HCT116 (cell line): ENCODE measurements at regions of chr1 and their contacts with region 1.

Region 1: DNA sequence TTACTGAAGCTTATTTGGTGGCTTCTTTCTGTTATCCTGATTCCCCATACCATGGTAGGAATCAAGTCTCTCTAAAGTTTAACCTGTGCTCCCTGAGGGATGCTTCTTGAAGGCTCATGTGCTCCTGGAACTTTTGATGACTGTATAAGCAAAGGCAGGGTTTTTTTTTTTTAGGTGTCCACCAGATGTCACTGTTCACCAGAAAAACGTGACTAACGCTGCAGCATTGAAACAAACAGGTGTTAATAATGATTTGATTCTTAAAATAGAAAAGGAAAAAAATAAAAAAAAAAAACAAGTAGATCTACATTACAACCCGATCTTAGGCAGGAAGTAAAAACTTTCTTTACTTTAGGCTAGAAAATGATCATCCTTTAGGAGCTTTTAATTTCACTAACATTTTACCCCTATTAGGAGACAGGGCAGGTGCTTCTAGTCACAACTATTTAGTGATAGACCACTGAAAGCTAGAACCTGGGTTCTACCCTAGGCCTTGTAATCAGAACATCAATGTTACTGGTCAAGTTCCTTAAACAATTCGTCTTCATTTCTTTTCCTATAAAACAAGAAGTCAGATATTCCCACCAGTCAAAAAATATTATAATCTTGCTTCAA is 223.0 kb downstream of the PLA2G4A start:
- DNase-seq: peak; percentile 59
- ATAC-seq: peak; percentile 74
- H3K4me3 ChIP-seq: no peak overlapping the region
- H3K27ac ChIP-seq: no peak overlapping the region
- H3K4me1 ChIP-seq: no peaks in the 10 kb centered on the region
- H3K27me3 ChIP-seq: no peaks in the 10 kb centered on the region
- CTCF ChIP-seq: peak; percentile 38 to 65 (median 51); a peak in 5 of 6 replicates
- POLR2A ChIP-seq: no peak
- RAD21 ChIP-seq: peak; percentile 70

Region 2: DNA sequence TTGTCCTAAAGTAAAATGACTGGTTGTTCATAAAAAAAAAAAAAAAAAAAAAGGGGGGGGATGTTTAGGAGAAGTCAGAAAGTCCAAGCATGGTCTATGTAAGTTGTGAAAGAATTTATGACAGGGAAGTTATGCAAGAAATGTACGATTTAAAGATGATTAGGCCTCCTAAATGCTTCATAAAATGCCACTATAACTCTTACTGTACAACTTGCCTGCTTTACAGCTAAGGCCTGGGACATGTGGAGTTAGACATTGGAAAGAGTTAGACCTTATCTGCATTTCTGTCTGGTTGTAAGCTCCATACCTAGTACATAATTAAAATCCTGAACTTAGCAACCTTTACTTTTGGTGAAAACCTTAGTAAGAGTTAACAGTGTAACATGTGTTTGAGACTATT is 826.6 kb before region 1 on chr1:
- CTCF ChIA-PET with region 1: no interaction called
- POLR2A ChIA-PET with region 1: no interaction called
- RAD21 ChIA-PET with region 1: no interaction called
- intact Hi-C with region 1: no loop called
- DNase-seq: no peak
- ATAC-seq: no peak
- H3K4me3 ChIP-seq: no peak overlapping the region
- H3K27ac ChIP-seq: no peak overlapping the region
- H3K4me1 ChIP-seq: no peaks in the 10 kb centered on the region
- H3K27me3 ChIP-seq: no peaks in the 10 kb centered on the region
- CTCF ChIP-seq: no peak
- POLR2A ChIP-seq: no peak
- RAD21 ChIP-seq: no peak

Region 3: DNA sequence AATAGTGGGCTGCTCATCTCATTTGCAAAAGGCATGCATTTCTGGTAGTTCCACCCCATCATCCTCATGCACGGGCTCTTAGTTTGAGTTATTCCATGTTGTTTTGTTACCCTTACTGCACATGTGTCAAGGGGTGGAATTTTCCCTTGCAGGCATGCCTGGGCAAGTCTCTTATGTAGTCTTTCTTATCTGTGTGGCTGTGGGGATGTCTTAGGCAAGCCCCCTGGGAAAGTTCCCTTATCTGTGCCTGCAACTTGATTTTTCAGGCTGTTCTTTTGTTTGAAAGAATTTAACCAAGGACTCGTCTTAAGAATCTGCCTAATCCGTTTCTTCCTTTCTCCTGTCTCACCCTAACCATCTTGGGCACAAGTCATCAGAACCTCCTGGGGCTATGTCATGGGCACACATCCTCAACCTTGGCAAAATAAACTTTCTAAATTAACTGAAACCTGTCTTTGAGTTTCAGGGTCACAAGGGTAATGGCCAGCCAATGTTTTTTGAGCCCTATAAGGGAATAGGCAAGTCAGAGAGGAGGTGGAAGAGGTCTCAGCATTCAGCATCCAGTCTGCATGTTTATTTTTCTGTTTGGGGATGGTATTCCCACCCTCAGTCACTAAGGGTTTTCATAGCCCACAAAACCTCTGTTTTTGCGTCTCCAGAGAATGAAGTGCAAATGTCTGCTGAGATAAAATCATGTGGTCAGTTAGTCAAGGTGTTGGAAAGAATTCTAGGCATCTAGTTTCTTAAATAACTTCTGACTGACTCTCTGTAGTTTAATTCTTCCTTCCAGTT is 356.7 kb after region 1 on chr1:
- CTCF ChIA-PET with region 1: interaction called, 3 read pairs
- POLR2A ChIA-PET with region 1: no interaction called
- RAD21 ChIA-PET with region 1: no interaction called
- intact Hi-C with region 1: loop called (anchors 10 kb)
- DNase-seq: no peak
- ATAC-seq: no peak
- H3K4me3 ChIP-seq: no peak overlapping the region
- H3K27ac ChIP-seq: no peak overlapping the region
- H3K4me1 ChIP-seq: no peaks in the 10 kb centered on the region
- H3K27me3 ChIP-seq: no peaks in the 10 kb centered on the region
- CTCF ChIP-seq: no peak
- POLR2A ChIP-seq: no peak
- RAD21 ChIP-seq: no peak

Region 4: DNA sequence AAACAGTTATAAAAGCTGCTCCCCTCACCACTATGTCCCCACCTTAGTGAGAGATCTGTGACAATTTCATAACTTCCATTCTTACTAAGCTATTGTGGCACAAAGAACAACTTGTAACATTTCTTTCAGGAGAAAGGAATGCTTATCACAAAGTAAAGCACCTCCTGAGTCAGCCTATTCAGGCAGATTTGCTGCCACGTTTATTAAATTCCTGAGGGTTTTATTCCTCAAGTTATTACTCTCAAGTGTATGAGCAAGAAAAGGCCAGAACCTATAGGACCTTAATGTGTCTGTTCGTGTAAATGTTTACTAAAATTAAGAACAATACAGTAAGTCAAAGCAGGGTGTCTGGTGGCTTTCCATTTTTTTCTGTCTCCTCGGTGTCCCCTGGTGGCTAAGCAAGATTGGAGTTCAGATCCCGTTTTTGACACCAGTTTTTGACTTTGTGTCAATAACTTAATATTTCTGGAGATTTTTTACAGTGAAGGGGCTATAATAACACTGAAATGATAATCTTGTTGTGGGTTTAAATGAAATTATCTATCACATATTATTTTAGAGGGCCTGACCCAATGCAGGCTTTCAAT is 1886.3 kb after region 1 on chr1:
- CTCF ChIA-PET with region 1: no interaction called
- POLR2A ChIA-PET with region 1: no interaction called
- RAD21 ChIA-PET with region 1: no interaction called
- intact Hi-C with region 1: loop called (anchors 10 kb)
- DNase-seq: peak; percentile 26
- ATAC-seq: peak; percentile 61
- H3K4me3 ChIP-seq: no peak overlapping the region
- H3K27ac ChIP-seq: no peak overlapping the region
- H3K4me1 ChIP-seq: no peaks in the 10 kb centered on the region
- H3K27me3 ChIP-seq: no peaks in the 10 kb centered on the region
- CTCF ChIP-seq: peak; percentile 42 to 65 (median 61); a peak in 5 of 6 replicates
- POLR2A ChIP-seq: no peak
- RAD21 ChIP-seq: peak; percentile 72